ENCODE measurements at regions of chr11 and their contacts with region 1.

Region 1: DNA sequence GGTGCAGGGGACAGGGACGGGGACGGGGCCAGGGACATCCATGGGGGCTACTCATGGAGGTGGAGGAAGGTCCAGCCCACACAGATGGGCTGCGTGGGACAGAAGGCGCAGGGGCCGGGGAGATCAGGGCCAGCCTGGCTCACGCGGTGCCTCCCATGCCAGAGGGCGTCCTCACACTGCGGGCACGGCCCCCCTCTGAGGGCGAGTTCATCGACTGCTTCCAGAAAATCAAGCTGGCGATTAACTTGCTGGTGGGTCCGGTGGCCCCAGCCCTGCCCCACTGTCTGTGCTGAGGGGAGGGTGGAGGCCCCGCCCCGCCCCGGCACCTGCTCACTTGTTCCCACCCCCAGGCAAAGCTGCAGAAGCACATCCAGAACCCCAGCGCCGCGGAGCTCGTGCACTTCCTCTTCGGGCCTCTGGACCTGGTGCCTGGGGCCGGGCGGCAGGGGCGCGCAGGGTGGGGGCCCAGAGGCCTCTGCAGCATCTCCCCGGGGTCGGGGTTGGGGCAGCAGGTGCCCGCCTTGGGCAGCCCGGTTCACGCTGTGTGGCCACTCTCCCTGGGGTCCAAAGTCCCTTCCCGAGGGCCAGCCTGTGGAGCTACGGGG is 15.8 kb downstream of the EPS8L2 start:
- DNase-seq: peak; percentile 75
- H3K4me3 ChIP-seq: peak overlapping the region; percentile 12
- H3K27ac ChIP-seq: no peak overlapping the region
- H3K4me1 ChIP-seq: peaks cover 47% of the 10 kb centered on the region
- CTCF ChIP-seq: no peak

Region 2: GRCh38 chr11:560305-561147 is 161.3 kb before region 1 on chr11 and contains the starts of genes LMNTD2 and RASSF7:
- CTCF ChIA-PET with region 1: interaction called, 12 read pairs
- POLR2A ChIA-PET with region 1: no interaction called
- intact Hi-C with region 1: loop called (anchors 5 kb)
- DNase-seq: peak; percentile 97
- H3K4me3 ChIP-seq: peak within 1 kb of the TSS; percentile 86
- H3K27ac ChIP-seq: no peak within 1 kb of the TSS
- H3K4me1 ChIP-seq: peaks cover 28% of the 10 kb centered on the region
- CTCF ChIP-seq: no peak
- total RNA-seq, gene LMNTD2: 4.7 and 7.5 TPM in 2 replicates
- total RNA-seq, gene RASSF7: 18.0 and 22.1 TPM in 2 replicates

Region 3: GRCh38 chr11:1736447-1737201 is 1014.8 kb after region 1 on chr11:
- CTCF ChIA-PET with region 1: interaction called, 10 read pairs
- POLR2A ChIA-PET with region 1: no interaction called
- intact Hi-C with region 1: no loop called
- DNase-seq: no peak
- H3K4me3 ChIP-seq: no peak overlapping the region
- H3K27ac ChIP-seq: no peak overlapping the region
- H3K4me1 ChIP-seq: no peaks in the 10 kb centered on the region
- CTCF ChIP-seq: no peak

Measured in OCI-LY7 (cell line).